ENCODE measurements at regions of chr1 and their contacts with region 1.

Region 1: DNA sequence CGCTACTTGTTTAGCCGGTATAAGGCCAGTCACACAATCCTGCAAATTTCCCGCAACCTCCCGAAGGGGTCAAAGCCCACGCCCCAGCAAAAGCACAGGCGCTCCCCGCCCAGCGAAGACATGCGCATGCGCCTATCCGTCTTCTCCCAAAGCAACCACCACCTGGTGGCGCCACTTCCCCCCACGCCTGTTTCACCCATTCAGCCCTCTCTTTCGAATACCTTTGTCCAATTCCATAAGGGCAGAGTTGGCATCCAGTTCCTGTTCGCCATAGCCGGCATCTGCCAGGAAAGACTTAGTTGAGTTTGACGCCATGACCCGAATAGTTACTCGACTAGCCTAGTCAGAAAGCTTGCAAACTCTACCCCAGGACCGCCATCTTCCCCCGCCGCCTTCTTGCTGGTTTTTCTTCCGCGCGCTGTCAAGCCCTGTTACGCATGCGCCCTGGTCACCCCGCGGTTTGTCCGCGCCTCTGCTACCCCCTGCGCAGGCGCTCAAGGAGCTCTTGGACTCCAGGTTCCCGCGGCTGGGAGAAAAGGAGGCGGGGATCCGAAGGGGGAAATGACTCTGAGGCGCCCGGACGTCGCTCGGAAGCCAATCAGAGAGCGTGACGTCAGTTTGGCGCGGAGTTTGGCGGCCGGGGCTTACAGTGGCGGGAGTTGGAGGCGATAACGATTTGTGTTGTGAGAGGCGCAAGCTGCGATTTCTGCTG is at the starts of genes DTL and INTS7:
- DNase-seq: peak; percentile 95
- H3K4me3 ChIP-seq: peak within 1 kb of the TSS; percentile 91
- CTCF ChIP-seq: peak; percentile 69

Region 2: GRCh38 chr1:211680752-211681327 is 354.4 kb before region 1 on chr1:
- CTCF ChIA-PET with region 1: interaction called, 254 read pairs
- POLR2A ChIA-PET with region 1: interaction called, 3 read pairs
- DNase-seq: peak; percentile 57
- H3K4me3 ChIP-seq: no peak overlapping the region
- CTCF ChIP-seq: peak; percentile 58

Region 3: DNA sequence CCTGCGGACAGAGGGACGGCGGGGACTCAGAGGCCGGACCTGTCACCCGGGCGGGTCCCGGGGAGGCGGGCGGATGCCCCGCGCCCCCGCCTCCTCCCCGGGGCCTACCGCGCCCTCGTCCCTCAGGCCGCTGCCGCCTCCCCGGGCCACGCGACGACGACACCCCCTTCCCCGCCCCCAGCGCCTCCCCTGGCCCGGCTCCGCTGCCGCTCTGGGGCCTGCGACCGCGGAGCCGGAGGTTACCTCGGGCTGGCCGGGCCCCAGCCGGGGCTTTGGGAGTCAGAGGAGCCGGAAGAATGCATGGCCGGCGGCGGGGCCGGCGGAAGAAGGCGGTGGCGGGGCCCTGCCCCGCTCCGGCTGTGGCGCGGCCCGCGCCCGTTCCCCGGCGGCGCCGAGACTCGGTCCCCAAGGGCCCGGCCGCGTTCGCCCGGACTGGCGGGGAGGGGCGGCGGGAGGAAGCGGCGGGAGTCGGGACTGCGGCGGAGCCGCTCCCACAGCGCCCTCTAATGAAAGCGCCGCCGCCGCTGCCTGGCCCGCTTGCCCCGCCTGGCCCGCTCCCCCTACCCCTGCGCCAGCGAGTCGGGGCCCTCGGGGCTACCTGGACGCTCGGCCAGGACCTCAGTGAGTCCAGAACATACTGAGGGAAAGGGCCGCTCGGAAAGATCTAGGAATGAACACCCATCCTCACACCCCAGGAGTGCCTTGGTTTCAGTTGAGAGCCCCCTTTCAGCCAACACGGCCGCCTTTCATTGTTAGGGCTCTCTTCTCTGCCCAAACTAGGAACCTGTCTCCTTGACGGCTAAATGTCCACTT is 204.7 kb before region 1 on chr1 and contains the start of gene LPGAT1:
- CTCF ChIA-PET with region 1: interaction called, 18 read pairs
- POLR2A ChIA-PET with region 1: no interaction called
- DNase-seq: no peak
- H3K4me3 ChIP-seq: peak within 1 kb of the TSS; percentile 68
- CTCF ChIP-seq: peak; percentile 73

Region 4: GRCh38 chr1:211991695-211992094 is 43.6 kb before region 1 on chr1:
- CTCF ChIA-PET with region 1: interaction called, 13 read pairs
- POLR2A ChIA-PET with region 1: no interaction called
- DNase-seq: no peak
- H3K4me3 ChIP-seq: no peak overlapping the region
- CTCF ChIP-seq: no peak

Region 5: DNA sequence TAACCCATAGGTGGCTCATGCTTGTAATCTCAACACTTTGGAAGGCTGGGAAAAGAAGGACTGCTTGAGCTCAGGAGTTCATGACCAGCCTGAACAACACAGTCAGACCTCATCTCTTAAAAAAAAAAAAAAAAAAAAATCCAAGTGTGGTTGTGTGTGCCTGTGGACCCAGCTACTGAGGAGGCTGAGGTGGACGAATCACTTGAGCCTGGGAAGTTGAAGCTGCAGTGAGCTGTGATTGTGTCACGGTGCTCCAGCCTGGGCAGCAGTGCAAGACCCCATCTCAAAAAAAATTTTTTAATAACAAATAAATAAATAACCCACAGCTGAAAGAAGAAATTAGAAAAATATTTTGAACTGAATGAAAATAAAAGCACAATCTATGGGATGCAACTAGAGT is 13.7 kb before region 1 on chr1:
- CTCF ChIA-PET with region 1: interaction called, 37 read pairs
- POLR2A ChIA-PET with region 1: no interaction called
- DNase-seq: no peak
- H3K4me3 ChIP-seq: no peak overlapping the region
- CTCF ChIP-seq: no peak

Region 6: GRCh38 chr1:212062832-212063438 is 27.7 kb after region 1 on chr1:
- CTCF ChIA-PET with region 1: interaction called, 25 read pairs
- POLR2A ChIA-PET with region 1: no interaction called
- DNase-seq: no peak
- H3K4me3 ChIP-seq: no peak overlapping the region
- CTCF ChIP-seq: peak; percentile 63

Region 7: DNA sequence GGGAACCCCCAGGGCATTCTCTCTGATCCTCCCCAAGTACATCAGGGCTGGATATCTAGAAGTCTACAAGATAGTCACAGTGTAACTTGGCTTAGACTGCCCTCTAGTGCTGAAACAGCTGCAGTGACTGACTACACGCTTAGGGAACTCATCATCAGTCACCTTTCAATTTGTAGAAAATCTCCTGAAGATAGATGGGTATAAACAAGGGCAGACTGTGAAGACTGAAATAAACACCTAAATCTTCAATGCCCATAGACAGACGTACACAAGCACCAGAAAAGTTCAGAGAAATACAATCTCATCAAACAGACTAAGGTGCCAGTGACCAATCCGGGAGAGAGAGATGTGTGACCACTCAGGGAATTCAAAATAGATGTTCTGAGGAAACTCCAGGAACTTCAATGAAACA is 332.8 kb after region 1 on chr1:
- CTCF ChIA-PET with region 1: interaction called, 46 read pairs
- POLR2A ChIA-PET with region 1: no interaction called
- DNase-seq: peak; percentile 23
- H3K4me3 ChIP-seq: no peak overlapping the region
- CTCF ChIP-seq: peak; percentile 81

Measured in AG04449 (cell line).